Heart left ventricle (tissue), 16 donors: ENCODE measurements at regions of chrX and their contacts with region 1.

Region 1: GRCh38 chrX:24498975-24499374 is 33.9 kb downstream of the PDK3 start:
- DNase-seq: no peak
- ATAC-seq: peak in 1 of 4 donors; percentile 39
- H3K4me3 ChIP-seq: no peak overlapping the region
- H3K27ac ChIP-seq: no peak overlapping the region
- H3K4me1 ChIP-seq: peaks cover 0 to 16% (median 5%) of the 10 kb centered on the region in 12 donors
- H3K27me3 ChIP-seq: no peaks in the 10 kb centered on the region
- CTCF ChIP-seq: peak; percentile 35 to 57 (median 48)
- POLR2A ChIP-seq: no peak

Region 2: GRCh38 chrX:24380262-24381187 is 118.5 kb before region 1 on chrX:
- intact Hi-C with region 1: loop called in 1 of 10 experiments (anchors 5 kb)
- DNase-seq: no peak
- ATAC-seq: peak in 2 of 4 donors; percentile 36 to 57
- H3K4me3 ChIP-seq: no peak overlapping the region
- H3K27ac ChIP-seq: peak overlapping the region in 1 of 12 donors; percentile 19
- H3K4me1 ChIP-seq: no peaks in the 10 kb centered on the region
- H3K27me3 ChIP-seq: peaks cover 0 to 33% (median 0%) of the 10 kb centered on the region in 9 donors
- CTCF ChIP-seq: no peak
- POLR2A ChIP-seq: no peak

Region 3: DNA sequence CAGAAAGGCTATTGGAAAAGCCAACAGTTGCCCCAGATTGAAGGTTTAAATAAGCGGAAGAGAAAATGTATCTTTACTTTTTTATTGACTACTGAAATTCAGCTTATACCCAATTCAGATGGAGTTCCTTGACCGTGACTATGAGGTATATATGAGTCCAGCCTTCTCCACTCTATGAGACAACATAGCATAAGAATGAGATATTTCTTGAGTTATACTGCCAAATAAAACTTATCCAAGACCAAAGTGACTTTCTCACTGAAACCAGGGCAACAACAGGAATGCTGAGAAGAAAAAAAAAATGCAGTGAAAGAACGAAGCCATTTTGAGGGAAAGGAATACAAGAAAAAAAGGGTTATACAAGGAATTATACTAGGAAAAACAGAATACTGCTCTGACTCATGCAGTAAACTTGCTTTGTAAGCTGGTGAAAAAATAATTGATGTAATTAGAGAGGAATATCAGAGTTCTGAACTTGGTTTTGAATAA is 50.2 kb before region 1 on chrX:
- intact Hi-C with region 1: no loop called
- DNase-seq: no peak
- ATAC-seq: no peak
- H3K4me3 ChIP-seq: no peak overlapping the region
- H3K27ac ChIP-seq: no peak overlapping the region
- H3K4me1 ChIP-seq: no peaks in the 10 kb centered on the region
- H3K27me3 ChIP-seq: peaks cover 0 to 13% (median 0%) of the 10 kb centered on the region in 9 donors
- CTCF ChIP-seq: no peak
- POLR2A ChIP-seq: no peak